ENCODE measurements at regions of chr11 and their contacts with region 1.

Region 1: DNA sequence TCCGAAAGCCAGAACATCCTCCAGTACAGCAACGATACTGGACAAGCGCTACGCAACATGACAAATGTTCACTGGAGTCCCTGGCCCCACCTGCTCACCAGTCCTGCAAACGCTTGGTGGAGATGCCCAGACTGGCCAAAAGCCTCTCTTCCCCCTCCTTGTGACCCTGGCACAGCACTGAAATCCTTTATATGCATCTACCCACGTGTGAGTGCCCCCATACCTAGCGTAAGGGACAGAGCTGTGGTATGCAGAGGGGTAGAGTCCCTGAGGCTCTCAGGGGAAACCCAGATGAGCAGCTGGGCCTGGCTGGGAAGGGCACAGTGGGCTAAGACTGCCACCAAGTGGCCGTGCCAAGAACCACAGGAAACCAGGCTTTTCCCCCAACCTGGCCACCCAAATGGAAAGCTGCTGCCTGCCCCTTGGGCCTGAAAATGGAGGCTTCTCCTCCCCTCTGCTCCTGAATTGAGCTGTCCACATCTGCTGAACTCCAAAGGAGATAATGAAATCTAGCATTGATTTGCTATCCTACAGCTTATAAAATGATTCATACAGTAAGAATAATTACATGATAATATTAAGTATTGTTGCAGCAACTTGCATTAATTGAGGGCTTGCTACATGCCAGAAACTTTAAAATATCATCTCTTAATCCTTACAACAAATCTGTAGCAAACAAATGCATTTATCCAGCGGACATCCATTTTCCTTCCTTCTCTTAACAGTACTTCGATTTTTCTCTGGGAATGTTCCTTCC is 24.8 kb upstream of the TTC12 start:
- DNase-seq: peak; percentile 48 to 84 (median 72)
- H3K4me3 ChIP-seq: no peak overlapping the region
- H3K27ac ChIP-seq: no peak overlapping the region
- H3K4me1 ChIP-seq: no peaks in the 10 kb centered on the region
- H3K27me3 ChIP-seq: no peaks in the 10 kb centered on the region
- CTCF ChIP-seq: peak; percentile 87 to 97 (median 94)
- POLR2A ChIP-seq: no peak

Region 2: GRCh38 chr11:112302231-112302732 is 987.3 kb before region 1 on chr11:
- intact Hi-C with region 1: loop called in 1 of 2 experiments (anchors 5 kb)
- DNase-seq: no peak
- H3K4me3 ChIP-seq: no peak overlapping the region
- H3K27ac ChIP-seq: peak overlapping the region in 3 of 5 donors; percentile 47 to 57 (median 50)
- H3K4me1 ChIP-seq: peaks cover 8 to 13% of the 10 kb centered on the region in 2 donors
- H3K27me3 ChIP-seq: no peaks in the 10 kb centered on the region
- CTCF ChIP-seq: no peak
- POLR2A ChIP-seq: no peak

Region 3: GRCh38 chr11:112817376-112817775 is 472.2 kb before region 1 on chr11:
- intact Hi-C with region 1: loop called in 1 of 2 experiments (anchors 10 kb)
- DNase-seq: peak in 1 of 7 donors; percentile 31
- H3K4me3 ChIP-seq: no peak overlapping the region
- H3K27ac ChIP-seq: no peak overlapping the region
- H3K4me1 ChIP-seq: no peaks in the 10 kb centered on the region
- H3K27me3 ChIP-seq: no peaks in the 10 kb centered on the region
- CTCF ChIP-seq: no peak
- POLR2A ChIP-seq: no peak

Region 4: DNA sequence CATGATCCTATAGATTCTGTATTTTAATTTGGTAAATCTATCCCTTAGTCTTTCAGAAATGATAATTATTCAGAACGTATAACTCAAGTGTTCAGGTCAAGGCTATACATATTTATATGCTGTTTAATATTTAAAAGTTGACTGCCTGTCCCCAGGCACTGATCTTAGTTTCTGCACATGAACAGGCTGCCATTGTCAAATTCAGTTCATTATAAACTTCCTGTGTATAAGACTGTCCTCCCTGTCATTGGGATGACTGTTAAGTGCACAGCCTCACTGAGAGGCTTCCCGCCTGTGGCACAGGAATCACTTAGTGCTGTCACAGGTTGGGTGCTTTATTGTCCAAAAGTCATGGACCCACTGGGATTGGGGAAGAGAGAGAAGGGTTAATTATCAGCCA is 67.4 kb before region 1 on chr11:
- intact Hi-C with region 1: no loop called
- DNase-seq: no peak
- H3K4me3 ChIP-seq: no peak overlapping the region
- H3K27ac ChIP-seq: no peak overlapping the region
- H3K4me1 ChIP-seq: no peaks in the 10 kb centered on the region
- H3K27me3 ChIP-seq: no peaks in the 10 kb centered on the region
- CTCF ChIP-seq: no peak
- POLR2A ChIP-seq: no peak

Region 5: GRCh38 chr11:113474362-113475159 is 185.0 kb after region 1 on chr11:
- intact Hi-C with region 1: no loop called
- DNase-seq: peak; percentile 67 to 89 (median 77)
- H3K4me3 ChIP-seq: no peak overlapping the region
- H3K27ac ChIP-seq: peak overlapping the region in 1 of 5 donors; percentile 45
- H3K4me1 ChIP-seq: peaks cover 0 to 5% of the 10 kb centered on the region in 2 donors
- H3K27me3 ChIP-seq: peaks cover 35% of the 10 kb centered on the region
- CTCF ChIP-seq: no peak
- POLR2A ChIP-seq: peak in 1 of 2 donors; percentile 33

Region 6: DNA sequence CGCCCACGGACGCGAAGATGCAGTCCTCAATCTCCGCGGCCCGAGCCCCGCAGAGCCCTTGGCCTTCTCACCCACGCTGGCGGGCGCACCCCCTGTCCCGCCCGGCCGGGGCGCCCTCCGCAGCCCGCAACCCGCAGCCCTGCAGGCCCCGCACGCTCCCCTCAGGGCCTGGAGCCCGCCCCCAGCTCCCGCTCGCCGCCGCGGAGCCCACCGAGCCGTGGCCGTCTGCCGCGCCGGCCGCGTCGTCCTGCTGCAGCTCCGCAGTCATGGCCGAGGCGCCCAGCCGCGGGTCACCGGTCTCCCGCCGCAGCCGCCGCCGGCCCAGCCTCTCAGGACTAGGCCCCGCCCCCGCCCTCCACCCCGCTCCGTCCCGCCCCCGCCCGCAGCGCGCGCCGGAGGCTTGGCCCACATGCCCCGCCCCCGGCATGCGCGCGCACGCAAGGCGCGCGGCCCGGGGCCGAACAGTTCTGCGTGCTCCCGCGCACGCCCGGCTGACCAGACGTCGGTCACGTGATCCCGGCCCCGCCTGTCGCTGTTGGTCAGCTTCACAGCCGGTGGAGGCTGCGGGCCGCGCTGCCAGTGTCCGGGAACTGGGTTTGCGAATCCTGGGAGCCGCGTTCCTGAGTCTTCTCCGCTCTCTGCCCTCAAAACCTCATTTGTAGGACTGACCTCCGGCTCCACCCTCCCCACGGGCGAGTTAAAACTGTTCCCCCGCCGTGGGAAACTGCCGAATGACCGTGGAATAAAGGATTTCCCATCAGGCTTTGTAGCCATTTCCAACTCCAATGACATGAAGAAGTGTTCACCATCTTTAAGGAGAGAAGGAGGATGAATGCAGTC is 585.8 kb after region 1 on chr11 and contains the start of gene USP28:
- intact Hi-C with region 1: no loop called
- DNase-seq: peak; percentile 97 to 99 (median 98)
- H3K4me3 ChIP-seq: peak within 1 kb of the TSS; percentile 47 to 99 (median 68)
- H3K27ac ChIP-seq: peak within 1 kb of the TSS; percentile 51 to 96 (median 95)
- H3K4me1 ChIP-seq: peaks cover 12 to 35% of the 10 kb centered on the region in 2 donors
- H3K27me3 ChIP-seq: no peaks in the 10 kb centered on the region
- CTCF ChIP-seq: peak in 3 of 6 experiments; percentile 23 to 39 (median 34)
- POLR2A ChIP-seq: peak; percentile 79 to 92
- total RNA-seq, gene USP28: 8.8 to 25.0 (median 19.6) TPM

Measured in adrenal gland (tissue), 19 donors.